ENCODE measurements at regions of chr7 and their contacts with region 1.

Region 1: DNA sequence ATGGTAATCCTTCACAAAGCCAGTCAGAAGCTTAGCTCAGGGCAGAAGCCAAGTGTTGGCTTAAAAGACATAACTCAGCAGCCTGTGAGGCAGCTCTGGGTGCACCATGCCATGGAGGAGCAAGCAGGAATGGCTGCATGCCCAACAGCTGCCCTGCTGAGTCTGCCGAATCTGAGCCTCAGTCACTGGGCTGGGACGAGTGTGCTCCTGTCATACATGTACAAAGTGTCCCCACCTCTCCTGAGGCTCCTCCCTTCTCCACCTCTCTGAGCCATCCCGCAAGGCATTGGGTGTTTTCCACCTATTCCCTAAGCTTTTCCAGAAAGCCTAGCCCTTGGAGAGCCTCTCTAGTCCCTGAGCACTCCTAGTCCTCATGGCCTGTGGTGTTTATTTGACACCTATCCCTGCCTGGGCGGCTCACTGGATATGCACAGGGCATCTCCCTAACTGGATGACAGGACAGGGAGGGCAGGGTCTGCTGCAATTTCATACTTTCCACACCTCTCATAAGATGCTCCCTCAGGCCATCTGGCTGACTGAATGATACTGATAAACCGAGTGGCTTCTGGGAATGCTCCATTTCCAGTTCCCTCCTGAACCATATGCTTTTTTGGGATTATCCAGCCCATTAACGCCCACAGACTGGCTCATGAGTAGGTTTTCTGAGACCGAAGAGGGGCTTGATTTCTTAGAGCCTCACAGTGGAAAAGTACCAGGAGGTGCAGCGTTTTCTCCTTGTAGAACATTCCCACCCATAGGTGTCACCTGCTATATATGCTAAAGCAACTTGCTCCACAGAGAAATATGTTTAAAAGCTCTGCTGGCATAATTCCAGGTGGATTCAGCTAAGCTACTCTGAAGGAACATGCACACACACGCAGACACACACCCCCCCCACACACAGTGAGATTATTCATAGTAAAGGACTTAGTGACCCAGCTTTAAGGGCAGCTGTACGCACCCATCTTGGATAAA is 199.3 kb downstream of the SNX10 start:
- DNase-seq: no peak
- H3K4me3 ChIP-seq: no peak overlapping the region
- H3K27ac ChIP-seq: peak overlapping the region in 3 of 4 donors; percentile 51 to 88 (median 72)
- H3K4me1 ChIP-seq: peaks cover 0 to 37% (median 9%) of the 10 kb centered on the region in 3 donors
- H3K27me3 ChIP-seq: peaks cover 0 to 15% (median 0%) of the 10 kb centered on the region in 4 donors
- CTCF ChIP-seq: peak in 1 of 6 experiments; percentile 6
- POLR2A ChIP-seq: no peak

Region 2: GRCh38 chr7:26321435-26321834 is 169.5 kb before region 1 on chr7:
- intact Hi-C with region 1: no loop called
- DNase-seq: no peak
- H3K4me3 ChIP-seq: no peak overlapping the region
- H3K27ac ChIP-seq: no peak overlapping the region
- H3K4me1 ChIP-seq: no peaks in the 10 kb centered on the region
- H3K27me3 ChIP-seq: no peaks in the 10 kb centered on the region
- CTCF ChIP-seq: no peak
- POLR2A ChIP-seq: no peak

Region 3: DNA sequence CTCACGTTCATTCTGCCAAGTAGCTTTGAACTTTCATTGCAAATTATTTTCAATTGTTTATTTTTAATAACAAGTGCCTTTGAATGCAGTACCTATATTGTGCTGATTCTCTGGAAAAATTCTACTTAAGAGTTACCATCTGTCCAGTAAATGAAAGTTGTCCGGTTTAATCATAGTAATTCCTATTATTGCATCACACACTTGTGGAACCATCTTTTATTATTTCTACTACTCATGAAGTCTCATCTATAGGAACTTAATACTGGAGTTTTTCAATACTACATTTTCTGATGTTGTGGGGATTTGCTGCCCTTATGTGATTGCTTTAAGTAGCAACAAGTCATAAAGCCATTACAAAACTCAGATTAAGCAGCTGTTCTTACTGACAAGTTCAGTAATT is 389.9 kb after region 1 on chr7:
- intact Hi-C with region 1: no loop called
- DNase-seq: no peak
- H3K4me3 ChIP-seq: no peak overlapping the region
- H3K27ac ChIP-seq: no peak overlapping the region
- H3K4me1 ChIP-seq: no peaks in the 10 kb centered on the region
- H3K27me3 ChIP-seq: no peaks in the 10 kb centered on the region
- CTCF ChIP-seq: no peak
- POLR2A ChIP-seq: no peak

Region 4: DNA sequence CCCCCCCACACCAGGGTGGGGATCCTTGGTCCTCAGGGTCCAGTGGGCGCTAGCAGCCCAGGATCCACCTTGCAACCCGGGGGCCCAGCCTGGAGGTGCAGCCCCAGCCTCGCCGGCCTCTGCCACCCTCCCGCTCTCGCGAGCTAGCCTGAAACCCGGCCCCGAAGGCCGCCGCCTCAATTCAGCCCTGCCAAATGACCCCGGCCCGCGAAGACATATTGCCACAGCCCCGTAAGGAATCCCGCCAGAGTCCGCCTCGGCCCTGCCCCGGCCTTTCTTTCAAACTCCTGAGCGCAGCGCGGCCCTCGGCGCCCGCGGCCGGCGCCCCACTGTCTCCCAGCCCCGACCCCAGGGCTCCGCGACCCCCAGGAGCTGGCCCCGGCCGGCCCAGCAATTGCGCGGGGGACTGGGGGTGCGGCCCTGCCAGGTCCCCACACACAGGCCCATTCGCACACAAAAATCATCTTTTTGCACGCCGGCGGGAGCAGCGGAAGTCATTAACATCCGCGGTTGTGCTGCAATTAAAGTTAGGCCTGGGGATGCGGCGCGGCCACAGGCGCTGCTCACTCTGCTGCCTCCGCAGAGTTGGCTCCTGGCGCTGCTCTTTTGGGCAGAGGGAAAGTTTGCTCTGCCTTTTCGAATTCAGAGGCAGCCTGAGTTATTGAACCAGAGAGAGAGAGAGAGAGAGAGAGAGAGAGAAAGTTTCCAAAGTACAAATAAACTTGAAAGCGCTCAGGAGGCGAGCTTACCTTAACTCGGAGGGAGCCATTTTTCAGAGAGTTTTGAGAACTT is 648.6 kb after region 1 on chr7:
- intact Hi-C with region 1: no loop called
- DNase-seq: no peak
- H3K4me3 ChIP-seq: peak overlapping the region; percentile 8 to 51 (median 14)
- H3K27ac ChIP-seq: peak overlapping the region; percentile 35 to 92 (median 82)
- H3K4me1 ChIP-seq: peaks cover 7 to 70% (median 14%) of the 10 kb centered on the region in 3 donors
- H3K27me3 ChIP-seq: peaks cover 0 to 59% (median 0%) of the 10 kb centered on the region in 4 donors
- CTCF ChIP-seq: no peak
- POLR2A ChIP-seq: no peak

Region 5: DNA sequence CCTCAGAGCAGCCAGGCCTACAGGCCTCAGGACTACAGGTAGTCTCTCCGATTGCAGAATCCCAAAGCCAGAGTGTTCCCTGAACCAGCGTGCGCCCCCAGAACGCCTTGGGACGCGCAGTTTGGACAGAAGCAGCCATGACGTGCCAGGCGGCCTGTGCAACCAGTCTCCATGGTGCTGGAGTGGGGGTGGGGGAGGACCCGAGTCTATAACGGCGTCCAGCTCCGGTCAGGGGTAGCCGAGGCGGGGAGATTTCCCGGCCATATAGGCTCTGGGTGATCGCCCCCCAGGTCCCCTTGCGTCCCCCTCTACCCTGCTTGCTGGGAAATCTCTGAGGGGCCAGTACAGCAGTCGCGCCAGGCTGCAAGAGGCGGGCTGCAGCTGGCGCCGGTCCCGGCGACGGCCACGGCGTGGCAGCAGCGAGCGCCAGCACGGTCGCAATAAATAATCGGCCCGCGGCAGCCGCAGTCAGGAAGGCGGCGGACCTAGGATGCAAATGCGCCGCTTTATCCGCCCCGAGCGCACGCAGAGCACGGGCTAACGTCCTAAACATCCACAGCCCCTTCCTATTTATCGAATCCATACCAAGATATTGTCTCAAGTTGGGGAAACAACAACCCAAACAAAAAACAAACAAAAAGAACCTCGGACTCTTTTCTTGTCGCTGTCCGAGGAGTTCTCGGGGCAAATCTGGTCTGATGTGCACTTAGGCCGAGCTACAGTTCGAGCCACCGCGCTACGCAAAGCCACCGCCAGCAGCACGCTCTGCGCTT is 659.8 kb after region 1 on chr7:
- intact Hi-C with region 1: loop called (anchors 5 kb)
- DNase-seq: no peak
- H3K4me3 ChIP-seq: peak overlapping the region; percentile 24 to 64 (median 42)
- H3K27ac ChIP-seq: peak overlapping the region; percentile 8 to 67 (median 34)
- H3K4me1 ChIP-seq: peaks cover 23 to 67% (median 34%) of the 10 kb centered on the region in 3 donors
- H3K27me3 ChIP-seq: peaks cover 10 to 100% (median 45%) of the 10 kb centered on the region in 4 donors
- CTCF ChIP-seq: peak; percentile 75 to 92 (median 84)
- POLR2A ChIP-seq: no peak

Measured in esophagus squamous epithelium (tissue), 5 donors.